ENCODE measurements at regions of chr15 and their contacts with region 1.

Region 1: GRCh38 chr15:48645558-48646330 is at the start of gene FBN1:
- DNase-seq: peak; percentile 61
- H3K4me3 ChIP-seq: peak within 1 kb of the TSS; percentile 69 to 80 (median 73)
- H3K27ac ChIP-seq: no peak within 1 kb of the TSS
- H3K4me1 ChIP-seq: peaks cover 17% of the 10 kb centered on the region
- H3K27me3 ChIP-seq: peaks cover 1% of the 10 kb centered on the region
- CTCF ChIP-seq: no peak
- total RNA-seq, gene FBN1: 14.0 to 26.7 TPM

Region 2: GRCh38 chr15:48352474-48353072 is 293.2 kb before region 1 on chr15:
- CTCF ChIA-PET with region 1: interaction called, 5 read pairs
- dilution Hi-C with region 1: no loop called
- in situ Hi-C with region 1: loop called in 1 of 2 experiments (anchors 25 kb)
- intact Hi-C with region 1: no loop called
- DNase-seq: peak; percentile 47
- H3K4me3 ChIP-seq: no peak overlapping the region
- H3K27ac ChIP-seq: no peak overlapping the region
- H3K4me1 ChIP-seq: no peaks in the 10 kb centered on the region
- H3K27me3 ChIP-seq: no peaks in the 10 kb centered on the region
- CTCF ChIP-seq: peak; percentile 78 to 84

Region 3: GRCh38 chr15:48507416-48508065 is 138.2 kb before region 1 on chr15:
- CTCF ChIA-PET with region 1: interaction called, 3 read pairs
- dilution Hi-C with region 1: no loop called
- in situ Hi-C with region 1: no loop called
- intact Hi-C with region 1: loop called (anchors 10 kb)
- DNase-seq: peak; percentile 37
- H3K4me3 ChIP-seq: no peak overlapping the region
- H3K27ac ChIP-seq: no peak overlapping the region
- H3K4me1 ChIP-seq: no peaks in the 10 kb centered on the region
- H3K27me3 ChIP-seq: no peaks in the 10 kb centered on the region
- CTCF ChIP-seq: peak; percentile 76 to 79

Region 4: DNA sequence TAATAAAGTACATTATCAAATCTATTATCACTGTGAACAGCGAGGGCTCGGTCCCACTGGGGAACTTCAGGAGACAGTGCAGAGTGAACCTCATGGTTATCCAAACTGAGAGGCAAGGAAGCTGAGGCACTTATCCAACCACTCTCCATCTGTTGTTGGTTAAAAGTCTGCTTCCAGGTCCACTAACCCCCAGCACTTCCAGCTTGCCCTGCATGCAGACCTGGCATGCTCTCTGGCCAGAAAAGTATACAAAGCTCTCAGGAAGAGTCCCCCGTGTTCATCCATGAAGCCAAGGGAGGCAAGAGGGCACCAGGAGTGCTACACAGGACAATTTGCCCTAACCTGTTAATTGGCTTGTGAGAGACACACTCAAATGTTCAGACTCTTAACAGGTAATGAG is 36.3 kb before region 1 on chr15:
- CTCF ChIA-PET with region 1: no interaction called
- dilution Hi-C with region 1: no loop called
- in situ Hi-C with region 1: no loop called
- intact Hi-C with region 1: no loop called
- DNase-seq: no peak
- H3K4me3 ChIP-seq: no peak overlapping the region
- H3K27ac ChIP-seq: no peak overlapping the region
- H3K4me1 ChIP-seq: no peaks in the 10 kb centered on the region
- H3K27me3 ChIP-seq: no peaks in the 10 kb centered on the region
- CTCF ChIP-seq: no peak

Region 5: GRCh38 chr15:48682949-48683651 is 37.4 kb after region 1 on chr15:
- CTCF ChIA-PET with region 1: no interaction called
- dilution Hi-C with region 1: no loop called
- in situ Hi-C with region 1: no loop called
- intact Hi-C with region 1: loop called (anchors 5 kb)
- DNase-seq: peak; percentile 61
- H3K4me3 ChIP-seq: no peak overlapping the region
- H3K27ac ChIP-seq: peak overlapping the region; percentile 30
- H3K4me1 ChIP-seq: peaks cover 39% of the 10 kb centered on the region
- H3K27me3 ChIP-seq: no peaks in the 10 kb centered on the region
- CTCF ChIP-seq: no peak

Region 6: DNA sequence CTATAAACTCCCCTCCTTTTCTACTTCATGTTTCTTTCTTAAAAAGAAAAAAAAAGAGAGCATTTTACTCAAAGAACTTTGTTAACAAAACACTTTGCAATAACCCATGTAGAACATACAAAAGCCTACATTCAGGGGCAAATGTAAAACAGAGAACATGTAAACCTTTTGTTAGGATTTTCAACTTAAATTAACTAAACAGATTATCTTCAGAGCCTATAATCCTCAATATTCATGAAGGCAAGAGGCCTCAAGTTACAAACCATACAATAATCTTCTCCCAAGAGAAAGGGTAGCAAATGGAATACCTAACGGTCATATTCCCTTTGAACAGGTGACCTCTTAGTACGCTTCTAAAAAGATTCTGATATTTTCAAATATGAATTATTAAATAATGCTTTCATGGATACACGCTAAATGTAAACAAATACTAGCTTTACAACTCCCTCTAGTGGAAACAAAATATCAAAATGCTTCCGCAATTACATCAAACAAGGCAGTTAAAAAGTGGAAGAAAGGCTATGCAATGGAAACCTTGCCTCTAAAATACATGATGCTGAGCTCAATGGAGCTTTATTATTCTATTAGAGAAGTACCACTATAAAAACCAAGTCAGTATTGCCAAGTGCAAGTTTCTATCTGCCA is 155.2 kb after region 1 on chr15:
- CTCF ChIA-PET with region 1: interaction called, 3 read pairs
- dilution Hi-C with region 1: no loop called
- in situ Hi-C with region 1: no loop called
- intact Hi-C with region 1: loop called (anchors 2 kb)
- DNase-seq: peak; percentile 7
- H3K4me3 ChIP-seq: no peak overlapping the region
- H3K27ac ChIP-seq: no peak overlapping the region
- H3K4me1 ChIP-seq: peaks cover 7% of the 10 kb centered on the region
- H3K27me3 ChIP-seq: no peaks in the 10 kb centered on the region
- CTCF ChIP-seq: peak; percentile 36 to 46

Region 7: DNA sequence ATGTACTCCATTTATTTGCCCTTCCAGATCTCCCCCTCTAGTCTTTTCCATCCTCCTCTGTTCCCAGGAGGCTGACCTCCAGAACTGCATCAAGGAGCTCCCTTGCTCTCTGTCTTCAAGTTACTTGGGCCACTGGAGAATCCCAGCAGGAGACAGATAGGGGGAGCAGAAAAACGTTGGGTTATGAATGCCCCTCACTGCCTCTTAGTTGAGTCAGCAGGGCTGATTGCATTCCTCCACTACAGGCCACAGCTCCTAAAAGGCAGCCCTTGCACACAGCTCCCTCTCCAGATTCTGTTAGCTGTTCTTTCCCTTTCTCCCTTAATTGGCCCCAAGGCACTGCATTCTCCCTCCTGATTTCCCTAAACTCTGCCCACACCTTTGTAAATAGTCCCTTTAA is 177.5 kb after region 1 on chr15:
- CTCF ChIA-PET with region 1: no interaction called
- dilution Hi-C with region 1: no loop called
- in situ Hi-C with region 1: no loop called
- intact Hi-C with region 1: no loop called
- DNase-seq: no peak
- H3K4me3 ChIP-seq: no peak overlapping the region
- H3K27ac ChIP-seq: no peak overlapping the region
- H3K4me1 ChIP-seq: no peaks in the 10 kb centered on the region
- H3K27me3 ChIP-seq: no peaks in the 10 kb centered on the region
- CTCF ChIP-seq: no peak

Measured in mammary epithelial cell (primary cell).